Naive thymus-derived CD8-positive, alpha-beta T cell (primary cell): ENCODE measurements at regions of chr17 and their contacts with region 1.

Region 1: DNA sequence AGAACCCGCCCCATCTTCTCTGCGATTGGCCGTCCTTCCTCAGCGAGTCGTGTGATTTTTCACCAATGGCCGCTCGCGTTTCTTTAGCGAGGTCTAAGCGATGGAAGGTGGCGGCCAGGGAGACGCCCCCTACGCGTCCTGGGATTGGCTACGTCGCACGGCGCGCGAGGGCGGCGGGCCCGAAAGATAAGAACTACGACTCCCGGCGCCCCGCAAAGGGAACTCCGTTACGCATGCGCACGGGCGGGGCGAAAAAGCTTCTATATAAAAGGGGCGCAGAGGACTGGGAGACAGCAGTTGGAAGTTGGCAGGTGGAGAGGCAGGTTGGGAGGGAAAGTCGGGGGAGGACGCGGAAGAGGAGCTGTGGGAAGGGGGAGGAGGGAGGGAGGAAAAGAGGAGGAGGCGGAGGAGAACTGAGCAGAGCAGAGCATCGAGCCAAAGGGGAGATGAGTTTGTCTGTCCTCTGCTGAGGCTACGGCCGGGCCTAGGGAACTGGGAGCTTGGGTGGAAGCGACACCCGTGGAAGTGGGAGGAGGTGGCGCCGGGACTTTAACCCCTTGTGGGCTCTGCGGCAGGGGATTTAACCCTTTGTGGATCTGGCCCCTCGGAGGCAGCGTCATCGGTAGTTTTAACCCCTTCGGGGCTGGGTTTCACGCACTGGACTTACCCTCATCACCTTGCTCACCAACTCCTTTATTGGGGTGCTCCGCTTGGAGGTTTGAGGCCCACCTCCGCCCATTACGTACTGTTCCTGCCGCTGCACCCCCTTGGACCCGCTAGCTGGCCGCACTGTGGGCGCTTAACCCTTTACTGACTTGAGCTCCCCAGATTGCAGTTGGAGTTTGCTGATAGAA is at the start of gene HEXIM1:
- DNase-seq: peak; percentile 95 to 100 (median 99)
- ATAC-seq: peak; percentile 74 to 83
- H3K4me3 Mint-ChIP-seq: peak within 1 kb of the TSS; percentile 93 to 99 (median 96)
- H3K27ac Mint-ChIP-seq: peak within 1 kb of the TSS; percentile 97 to 100 (median 100)
- H3K4me1 Mint-ChIP-seq: peaks cover 36 to 75% (median 55%) of the 10 kb centered on the region in 4 donors
- H3K27me3 Mint-ChIP-seq: peaks cover 0 to 3% (median 0%) of the 10 kb centered on the region in 5 donors
- polyA plus RNA-seq, gene HEXIM1: 4.9 to 6.8 (median 5.4) TPM

Region 2: GRCh38 chr17:45060797-45061605 is 87.4 kb before region 1 on chr17 and contains the start of gene NMT1:
- POLR2A ChIA-PET with region 1: interaction called, 18 read pairs
- DNase-seq: peak; percentile 81 to 99 (median 96)
- ATAC-seq: peak; percentile 90
- H3K4me3 Mint-ChIP-seq: peak within 1 kb of the TSS; percentile 94 to 100 (median 100)
- H3K27ac Mint-ChIP-seq: peak within 1 kb of the TSS; percentile 95 to 100 (median 98)
- H3K4me1 Mint-ChIP-seq: peaks cover 11 to 61% (median 43%) of the 10 kb centered on the region in 4 donors
- H3K27me3 Mint-ChIP-seq: no peaks in the 10 kb centered on the region
- polyA plus RNA-seq, gene NMT1: 55.2 to 70.8 (median 65.0) TPM

Region 3: GRCh38 chr17:45088741-45089140 is 59.7 kb before region 1 on chr17:
- POLR2A ChIA-PET with region 1: no interaction called
- DNase-seq: no peak
- ATAC-seq: no peak
- H3K4me3 Mint-ChIP-seq: no peak overlapping the region
- H3K27ac Mint-ChIP-seq: peak overlapping the region in 3 of 10 donors; percentile 29 to 43 (median 42)
- H3K4me1 Mint-ChIP-seq: peaks cover 0 to 3% (median 0%) of the 10 kb centered on the region in 4 donors
- H3K27me3 Mint-ChIP-seq: no peaks in the 10 kb centered on the region

Region 4: GRCh38 chr17:45098869-45099616 is 49.4 kb before region 1 on chr17:
- POLR2A ChIA-PET with region 1: no interaction called
- DNase-seq: peak; percentile 51 to 85 (median 69)
- ATAC-seq: peak; percentile 89 to 90
- H3K4me3 Mint-ChIP-seq: no peak overlapping the region
- H3K27ac Mint-ChIP-seq: peak overlapping the region in 9 of 10 donors; percentile 28 to 73 (median 43)
- H3K4me1 Mint-ChIP-seq: peaks cover 0 to 10% (median 2%) of the 10 kb centered on the region in 4 donors
- H3K27me3 Mint-ChIP-seq: no peaks in the 10 kb centered on the region

Region 5: GRCh38 chr17:45110668-45111611 is 37.5 kb before region 1 on chr17:
- POLR2A ChIA-PET with region 1: no interaction called
- DNase-seq: no peak
- ATAC-seq: no peak
- H3K4me3 Mint-ChIP-seq: no peak overlapping the region
- H3K27ac Mint-ChIP-seq: peak overlapping the region in 3 of 10 donors; percentile 13 to 72 (median 33)
- H3K4me1 Mint-ChIP-seq: peaks cover 0 to 2% (median under 1%) of the 10 kb centered on the region in 4 donors
- H3K27me3 Mint-ChIP-seq: no peaks in the 10 kb centered on the region

Region 6: GRCh38 chr17:45123930-45124796 is 24.2 kb before region 1 on chr17:
- POLR2A ChIA-PET with region 1: no interaction called
- DNase-seq: no peak
- ATAC-seq: peak in 1 of 2 donors; percentile 42
- H3K4me3 Mint-ChIP-seq: no peak overlapping the region
- H3K27ac Mint-ChIP-seq: peak overlapping the region in 1 of 10 donors; percentile 7
- H3K4me1 Mint-ChIP-seq: peaks cover 0 to 2% (median under 1%) of the 10 kb centered on the region in 4 donors
- H3K27me3 Mint-ChIP-seq: peaks cover 0 to 8% (median 2%) of the 10 kb centered on the region in 5 donors

Region 7: GRCh38 chr17:45161019-45161825 is 12.8 kb after region 1 on chr17:
- POLR2A ChIA-PET with region 1: interaction called, 676 read pairs
- DNase-seq: peak; percentile 91 to 100 (median 99)
- ATAC-seq: peak; percentile 93 to 95
- H3K4me3 Mint-ChIP-seq: peak overlapping the region; percentile 88 to 98 (median 95)
- H3K27ac Mint-ChIP-seq: peak overlapping the region; percentile 96 to 99 (median 98)
- H3K4me1 Mint-ChIP-seq: peaks cover 14 to 47% (median 38%) of the 10 kb centered on the region in 4 donors
- H3K27me3 Mint-ChIP-seq: no peaks in the 10 kb centered on the region

Region 8: GRCh38 chr17:45197555-45198334 is 49.3 kb after region 1 on chr17:
- POLR2A ChIA-PET with region 1: interaction called, 78 read pairs
- DNase-seq: peak; percentile 72 to 92 (median 84)
- ATAC-seq: peak; percentile 99 to 100
- H3K4me3 Mint-ChIP-seq: no peak overlapping the region
- H3K27ac Mint-ChIP-seq: no peak overlapping the region
- H3K4me1 Mint-ChIP-seq: peaks cover 2 to 9% (median 5%) of the 10 kb centered on the region in 4 donors
- H3K27me3 Mint-ChIP-seq: no peaks in the 10 kb centered on the region

Region 9: GRCh38 chr17:45228763-45229539 is 80.5 kb after region 1 on chr17:
- POLR2A ChIA-PET with region 1: interaction called, 159 read pairs
- DNase-seq: peak; percentile 63 to 86 (median 77)
- ATAC-seq: peak; percentile 48 to 55
- H3K4me3 Mint-ChIP-seq: peak overlapping the region; percentile 84 to 100 (median 98)
- H3K27ac Mint-ChIP-seq: peak overlapping the region; percentile 98 to 100 (median 100)
- H3K4me1 Mint-ChIP-seq: peaks cover 59 to 98% (median 86%) of the 10 kb centered on the region in 4 donors
- H3K27me3 Mint-ChIP-seq: no peaks in the 10 kb centered on the region

Region 10: GRCh38 chr17:45256114-45256966 is 107.9 kb after region 1 on chr17:
- POLR2A ChIA-PET with region 1: interaction called, 10 read pairs
- DNase-seq: peak in 4 of 10 donors; percentile 17 to 64 (median 25)
- ATAC-seq: peak; percentile 49 to 53
- H3K4me3 Mint-ChIP-seq: peak overlapping the region in 9 of 10 donors; percentile 33 to 73 (median 59)
- H3K27ac Mint-ChIP-seq: peak overlapping the region; percentile 50 to 89 (median 76)
- H3K4me1 Mint-ChIP-seq: peaks cover 44 to 75% (median 71%) of the 10 kb centered on the region in 4 donors
- H3K27me3 Mint-ChIP-seq: no peaks in the 10 kb centered on the region

Region 11: DNA sequence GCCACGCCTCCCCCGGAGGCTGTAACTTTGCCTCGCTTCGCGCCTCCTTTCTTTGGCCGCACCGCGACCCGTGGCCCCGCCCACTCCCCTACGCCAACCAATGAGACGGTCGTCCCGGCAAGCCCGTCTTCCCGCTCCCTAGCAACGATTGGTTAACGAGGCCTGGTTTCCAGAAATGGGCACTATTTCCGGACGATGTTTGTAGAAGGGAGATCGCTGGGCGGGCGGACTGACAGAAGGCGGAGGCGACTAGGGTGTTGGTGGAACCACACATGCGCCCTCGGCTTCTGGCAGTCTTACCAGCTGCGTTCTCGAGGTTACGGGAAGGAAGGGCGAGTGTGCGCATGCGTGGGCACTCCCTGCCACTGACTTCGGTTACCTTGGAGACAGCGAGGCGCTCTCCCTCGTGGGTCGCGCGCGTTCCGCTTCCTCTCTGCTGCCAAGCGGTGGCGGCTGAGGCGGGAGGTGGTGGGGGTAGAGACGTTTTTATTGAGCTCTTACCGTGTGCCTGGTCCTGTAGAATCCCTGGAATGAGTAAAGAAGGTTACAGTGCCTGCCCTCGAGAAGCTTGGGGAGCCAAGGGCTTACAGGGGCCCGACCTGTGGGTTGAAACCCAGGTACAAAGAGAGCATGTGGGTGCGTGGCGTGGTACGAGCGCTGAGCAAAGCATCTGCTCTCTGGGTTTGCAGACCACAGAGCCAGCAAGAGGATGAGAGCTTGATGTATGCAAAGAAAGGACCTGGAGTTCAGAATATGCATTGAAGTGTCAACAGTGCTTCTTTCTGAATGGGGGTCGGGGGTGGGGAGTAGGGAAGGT is 168.9 kb after region 1 on chr17:
- POLR2A ChIA-PET with region 1: interaction called, 26 read pairs
- DNase-seq: peak; percentile 95 to 100 (median 100)
- ATAC-seq: peak; percentile 85 to 86
- H3K4me3 Mint-ChIP-seq: peak overlapping the region; percentile 76 to 96 (median 94)
- H3K27ac Mint-ChIP-seq: peak overlapping the region; percentile 88 to 99 (median 96)
- H3K4me1 Mint-ChIP-seq: peaks cover 56 to 88% (median 85%) of the 10 kb centered on the region in 4 donors
- H3K27me3 Mint-ChIP-seq: peaks cover 0 to 4% (median 0%) of the 10 kb centered on the region in 5 donors